MCF 10A (cell line): ENCODE measurements at regions of chr17 and their contacts with region 1.

Region 1: GRCh38 chr17:75978938-75979704 is at the starts of genes ACOX1 and TEN1:
- DNase-seq: peak; percentile 98
- H3K4me3 Mint-ChIP-seq: peak within 1 kb of the TSS; percentile 100
- H3K27ac Mint-ChIP-seq: peak within 1 kb of the TSS; percentile 100
- H3K4me1 Mint-ChIP-seq: peaks cover 19% of the 10 kb centered on the region
- H3K27me3 Mint-ChIP-seq: no peaks in the 10 kb centered on the region
- CTCF ChIP-seq: no peak
- total RNA-seq, gene ACOX1: 23.4 and 26.0 TPM in 2 replicates
- total RNA-seq, gene TEN1: 13.0 and 15.4 TPM in 2 replicates

Region 2: DNA sequence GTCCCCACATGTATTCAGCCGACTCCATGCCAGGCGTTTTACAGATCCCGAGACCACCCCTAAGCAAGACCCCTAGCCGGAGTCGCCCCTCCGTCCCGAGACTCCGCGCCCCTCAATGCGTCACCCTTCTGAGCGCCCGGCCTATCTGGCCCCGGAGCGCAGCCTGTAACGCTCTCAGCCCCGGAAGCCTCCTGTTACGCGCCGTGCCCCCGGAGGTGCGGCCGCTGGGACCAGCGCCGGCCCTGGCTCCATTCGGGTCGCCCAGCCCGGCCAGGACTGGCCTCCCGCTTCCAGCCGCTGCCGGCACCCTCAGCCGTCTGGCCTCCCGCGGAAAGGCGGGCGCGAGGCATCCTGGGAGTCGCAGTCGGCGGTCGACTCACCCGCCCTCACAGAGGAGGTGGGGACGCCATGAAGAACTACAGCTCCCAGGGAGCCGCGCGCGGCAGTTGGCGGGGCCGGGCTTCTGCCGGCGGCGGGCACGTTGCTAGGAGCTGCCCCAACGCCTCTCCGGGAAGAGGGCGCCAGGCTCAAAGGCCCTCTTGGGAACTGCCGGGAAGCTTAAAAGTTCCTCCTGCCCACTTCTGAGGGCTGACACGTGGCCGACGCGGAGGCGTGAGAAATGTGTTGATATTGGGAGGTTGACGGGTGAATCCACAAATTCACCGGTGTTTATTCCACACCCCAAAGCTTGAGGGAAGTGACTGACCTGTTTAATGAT is 38.2 kb before region 1 on chr17 and contains the start of gene FBF1:
- CTCF ChIA-PET with region 1: interaction called, 3 read pairs
- POLR2A ChIA-PET with region 1: interaction called, 9 read pairs
- intact Hi-C with region 1: loop called (anchors 5 kb)
- DNase-seq: peak; percentile 96
- H3K4me3 Mint-ChIP-seq: peak within 1 kb of the TSS; percentile 78
- H3K27ac Mint-ChIP-seq: peak within 1 kb of the TSS; percentile 74
- H3K4me1 Mint-ChIP-seq: peaks cover 10% of the 10 kb centered on the region
- H3K27me3 Mint-ChIP-seq: no peaks in the 10 kb centered on the region
- CTCF ChIP-seq: no peak
- total RNA-seq, gene FBF1: 14.0 and 18.8 TPM in 2 replicates